Lower leg skin (tissue), 4 donors: ENCODE measurements at regions of chr7 and their contacts with region 1.

Region 1: GRCh38 chr7:44117801-44118429 is 5.4 kb downstream of the POLD2 start:
- DNase-seq: no peak
- H3K4me3 ChIP-seq: no peak overlapping the region
- CTCF ChIP-seq: no peak
- POLR2A ChIP-seq: no peak

Region 2: DNA sequence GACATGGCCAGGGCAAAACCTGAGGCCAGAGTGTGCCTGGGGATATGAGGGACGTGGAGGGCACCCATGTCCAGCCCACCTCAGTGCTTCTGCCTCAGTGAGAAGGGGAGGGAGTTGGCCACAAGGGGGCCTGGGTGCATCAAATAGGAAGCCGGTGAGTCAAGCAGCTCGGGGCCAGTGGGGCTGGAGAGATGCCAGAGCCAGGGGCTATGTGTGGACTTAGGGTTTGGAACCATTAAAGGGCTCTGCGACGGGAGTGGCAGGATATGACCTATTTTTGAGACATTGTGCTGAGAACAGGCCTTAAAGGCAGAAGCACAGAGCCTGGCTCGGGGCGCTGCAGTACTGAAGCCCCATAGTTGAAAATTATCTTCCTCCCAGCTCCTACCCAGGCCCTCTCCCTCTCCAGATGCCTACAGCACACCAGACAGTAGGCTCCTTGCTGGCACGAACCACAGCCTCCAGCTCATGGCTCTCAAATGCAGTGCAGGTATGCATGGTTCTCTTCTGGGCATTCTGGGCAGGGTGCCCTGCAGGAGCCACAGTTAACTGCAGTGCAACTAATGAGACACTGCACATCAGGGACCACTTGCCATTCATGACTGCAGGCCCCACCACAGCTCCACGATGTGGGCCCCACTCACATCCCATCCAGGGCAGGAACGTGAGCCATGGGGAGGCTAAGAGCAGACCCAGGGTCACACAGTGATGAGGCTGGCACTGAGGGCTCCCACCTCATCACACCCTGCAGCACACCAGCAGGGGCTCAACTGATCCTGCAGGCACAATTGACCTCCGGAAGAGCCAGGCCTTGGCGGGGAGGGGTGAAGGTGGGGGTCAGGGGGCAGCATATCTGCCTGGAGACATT is 45.3 kb before region 1 on chr7:
- intact Hi-C with region 1: loop called (anchors 1 kb)
- DNase-seq: peak in 1 of 2 donors; percentile 95
- H3K4me3 ChIP-seq: no peak overlapping the region
- CTCF ChIP-seq: no peak
- POLR2A ChIP-seq: no peak